ENCODE measurements at regions of chr17 and their contacts with region 1.

Region 1: GRCh38 chr17:79749156-79749815 is 18.5 kb downstream of the ENPP7 start:
- DNase-seq: no peak
- ATAC-seq: no peak
- H3K4me3 ChIP-seq: no peak overlapping the region
- H3K27ac ChIP-seq: peak overlapping the region; percentile 26; the same call in 1 of the 3 replicates
- H3K4me1 ChIP-seq: peaks cover 18 to 20% of the 10 kb centered on the region in 2 experiments
- H3K27me3 ChIP-seq: no peaks in the 10 kb centered on the region
- CTCF ChIP-seq: no peak
- EP300 ChIP-seq: no peak
- POLR2A ChIP-seq: no peak
- RAD21 ChIP-seq: no peak

Region 2: DNA sequence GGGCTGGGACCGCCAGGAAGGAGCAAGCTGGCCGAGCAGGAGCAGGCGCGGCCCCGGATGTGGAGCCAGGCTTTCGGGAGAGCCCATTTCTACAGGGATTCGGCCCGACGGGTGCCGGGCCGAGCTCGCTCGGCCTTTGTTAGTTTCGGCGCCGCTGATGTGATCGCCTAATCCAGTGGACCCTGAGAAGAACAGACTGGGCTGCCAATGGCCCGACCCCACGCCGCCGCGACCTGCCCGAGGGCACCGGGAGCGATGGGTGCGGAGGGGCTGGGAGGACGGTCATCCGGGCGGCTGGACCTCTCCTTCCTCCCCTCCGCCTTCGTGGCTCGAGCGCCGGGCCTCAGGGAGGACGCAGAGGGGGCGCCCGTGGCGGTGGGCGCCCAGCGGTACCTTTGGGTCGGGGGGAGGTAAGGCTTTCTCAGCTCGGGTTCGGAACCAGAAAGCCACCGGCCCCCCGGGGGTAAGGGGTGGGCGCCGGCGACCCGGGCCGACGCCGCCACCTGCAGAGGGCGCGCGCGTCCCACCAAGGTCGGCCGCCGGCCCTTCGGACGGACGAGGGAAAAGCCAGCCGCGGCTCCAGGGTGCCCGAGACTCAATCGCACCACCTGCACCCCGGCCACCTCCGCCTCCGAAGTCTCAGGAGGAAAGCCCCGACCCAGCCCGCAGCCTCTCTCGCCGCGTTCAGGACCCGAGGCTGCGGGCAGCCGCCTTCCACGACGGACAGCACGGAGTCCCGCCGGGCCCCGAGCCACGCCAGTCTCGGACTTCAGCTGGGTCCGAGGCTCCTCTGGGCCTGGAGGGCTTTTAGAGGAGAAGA is 40.5 kb after region 1 on chr17:
- CTCF ChIA-PET with region 1: no interaction called
- POLR2A ChIA-PET with region 1: interaction called, 3 read pairs
- in situ Hi-C with region 1: loop called (anchors 5 kb)
- intact Hi-C with region 1: loop called (anchors 5 kb)
- DNase-seq: peak; percentile 64 to 87 (median 82)
- ATAC-seq: peak; percentile 92
- H3K4me3 ChIP-seq: no peak overlapping the region
- H3K27ac ChIP-seq: no peak overlapping the region
- H3K4me1 ChIP-seq: peaks cover 3 to 42% of the 10 kb centered on the region in 2 experiments; a peak in 4 of 5 replicates
- H3K27me3 ChIP-seq: no peaks in the 10 kb centered on the region
- CTCF ChIP-seq: peak; percentile 76 to 89 (median 77)
- EP300 ChIP-seq: no peak
- POLR2A ChIP-seq: no peak
- RAD21 ChIP-seq: peak; percentile 91 to 93

Region 3: DNA sequence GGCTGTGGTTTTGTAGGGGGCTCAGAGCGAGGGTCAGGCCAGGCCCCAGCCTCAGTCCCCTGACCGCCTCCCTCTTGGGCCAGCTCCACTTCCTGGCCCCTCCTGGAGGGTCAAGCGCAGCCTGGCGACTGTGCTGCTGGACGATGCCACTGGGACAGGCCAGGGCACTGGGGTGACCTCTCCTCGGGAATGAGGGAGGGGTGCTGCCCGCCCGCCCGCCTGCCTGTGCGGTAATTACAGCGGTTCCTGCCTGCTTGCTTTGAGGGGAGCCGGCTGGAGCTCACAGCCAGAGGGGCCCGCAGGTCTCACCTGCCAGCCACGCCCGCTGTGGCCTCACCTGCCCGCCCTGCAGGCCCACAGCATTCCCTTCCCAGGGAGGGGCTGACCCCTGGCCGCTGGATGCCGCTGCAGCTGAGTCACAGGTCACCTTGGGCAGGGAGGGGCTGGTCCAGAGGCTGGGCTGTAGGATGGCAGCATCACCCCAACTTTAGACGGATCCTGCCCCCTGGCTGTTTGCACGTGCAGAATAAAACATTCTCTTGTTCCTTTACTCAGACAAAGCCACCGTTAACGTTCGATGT is 166.7 kb after region 1 on chr17:
- CTCF ChIA-PET with region 1: interaction called, 12 read pairs
- POLR2A ChIA-PET with region 1: interaction called, 3 read pairs
- in situ Hi-C with region 1: loop called (anchors 10 kb)
- intact Hi-C with region 1: no loop called
- DNase-seq: peak; percentile 71 to 84 (median 82)
- ATAC-seq: peak; percentile 90
- H3K4me3 ChIP-seq: no peak overlapping the region
- H3K27ac ChIP-seq: no peak overlapping the region
- H3K4me1 ChIP-seq: peaks cover 0 to 22% of the 10 kb centered on the region in 2 experiments; a peak in 2 of 5 replicates
- H3K27me3 ChIP-seq: peaks cover 2 to 70% of the 10 kb centered on the region in 2 experiments; a peak in 3 of 5 replicates
- CTCF ChIP-seq: peak; percentile 66 to 81 (median 72)
- EP300 ChIP-seq: no peak
- POLR2A ChIP-seq: no peak
- RAD21 ChIP-seq: peak; percentile 88 to 92

Region 4: GRCh38 chr17:79970576-79971068 is 221.3 kb after region 1 on chr17:
- CTCF ChIA-PET with region 1: no interaction called
- POLR2A ChIA-PET with region 1: no interaction called
- in situ Hi-C with region 1: no loop called
- intact Hi-C with region 1: loop called (anchors 2 kb)
- DNase-seq: peak in 2 of 4 experiments; percentile 48 to 72
- ATAC-seq: peak; percentile 76
- H3K4me3 ChIP-seq: no peak overlapping the region
- H3K27ac ChIP-seq: no peak overlapping the region
- H3K4me1 ChIP-seq: peaks cover 0 to 2% of the 10 kb centered on the region in 2 experiments; a peak in 1 of 5 replicates
- H3K27me3 ChIP-seq: peaks cover 30 to 48% of the 10 kb centered on the region in 2 experiments
- CTCF ChIP-seq: peak; percentile 72 to 75 (median 74)
- EP300 ChIP-seq: no peak
- POLR2A ChIP-seq: no peak
- RAD21 ChIP-seq: peak in 1 of 2 experiments; percentile 40; a peak in 2 of 4 replicates

Measured in K562 (cell line).